Heart right ventricle (tissue), 16 donors: ENCODE measurements at regions of chr11 and their contacts with region 1.

Region 1: GRCh38 chr11:85826116-85826855 is 15.3 kb upstream of the SYTL2 start:
- DNase-seq: peak; percentile 37 to 40
- ATAC-seq: peak in 7 of 8 donors; percentile 62 to 80 (median 70)
- H3K4me3 ChIP-seq: no peak overlapping the region
- H3K27ac ChIP-seq: no peak overlapping the region
- H3K4me1 ChIP-seq: peaks cover 0 to 32% (median 0%) of the 10 kb centered on the region in 9 donors
- H3K27me3 ChIP-seq: no peaks in the 10 kb centered on the region
- CTCF ChIP-seq: peak; percentile 25 to 68 (median 57)

Region 2: GRCh38 chr11:85182441-85183387 is 643.6 kb before region 1 on chr11:
- intact Hi-C with region 1: loop called in 1 of 10 experiments (anchors 5 kb)
- DNase-seq: no peak
- ATAC-seq: no peak
- H3K4me3 ChIP-seq: no peak overlapping the region
- H3K27ac ChIP-seq: no peak overlapping the region
- H3K4me1 ChIP-seq: no peaks in the 10 kb centered on the region
- H3K27me3 ChIP-seq: no peaks in the 10 kb centered on the region
- CTCF ChIP-seq: peak in 5 of 9 donors; percentile 11 to 38 (median 24)

Region 3: GRCh38 chr11:85595285-85595884 is 230.9 kb before region 1 on chr11:
- intact Hi-C with region 1: loop called in 8 of 10 experiments (anchors 2 to 10 kb)
- DNase-seq: no peak
- ATAC-seq: peak in 1 of 8 donors; percentile 62
- H3K4me3 ChIP-seq: no peak overlapping the region
- H3K27ac ChIP-seq: no peak overlapping the region
- H3K4me1 ChIP-seq: no peaks in the 10 kb centered on the region
- H3K27me3 ChIP-seq: no peaks in the 10 kb centered on the region
- CTCF ChIP-seq: peak; percentile 42 to 79 (median 65)

Region 4: DNA sequence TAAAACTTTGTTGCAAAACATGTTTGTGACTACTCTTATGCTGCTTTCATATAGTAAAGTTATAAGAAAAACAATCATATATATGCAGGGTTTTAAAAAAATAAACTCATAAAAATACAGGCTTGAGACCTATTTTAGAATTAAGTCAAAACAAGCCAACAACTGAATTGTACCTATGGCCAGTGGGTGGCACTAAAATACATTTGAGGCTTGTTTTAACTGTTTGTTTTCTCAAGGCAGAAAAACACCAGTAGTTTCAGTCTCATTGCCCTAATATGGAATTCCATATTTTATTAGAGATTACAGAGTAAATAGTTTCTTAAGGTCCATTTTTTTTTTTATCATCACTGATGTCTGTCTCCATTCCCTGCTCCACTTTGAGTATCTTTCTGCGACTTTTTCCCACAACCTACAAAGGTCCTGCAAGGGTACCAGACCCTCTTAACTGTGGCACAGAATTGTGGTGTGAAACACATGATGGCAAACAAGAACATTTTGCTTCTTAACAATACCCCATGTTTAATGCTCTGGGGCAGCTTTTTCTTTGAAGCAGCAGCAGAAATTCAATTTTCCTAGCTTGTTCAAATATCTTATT is 131.8 kb before region 1 on chr11:
- intact Hi-C with region 1: loop called in 7 of 10 experiments (anchors 2 to 10 kb)
- DNase-seq: no peak
- ATAC-seq: no peak
- H3K4me3 ChIP-seq: no peak overlapping the region
- H3K27ac ChIP-seq: no peak overlapping the region
- H3K4me1 ChIP-seq: peaks cover 0 to 1% (median 0%) of the 10 kb centered on the region in 9 donors
- H3K27me3 ChIP-seq: no peaks in the 10 kb centered on the region
- CTCF ChIP-seq: peak in 8 of 9 donors; percentile 16 to 73 (median 60)

Region 5: DNA sequence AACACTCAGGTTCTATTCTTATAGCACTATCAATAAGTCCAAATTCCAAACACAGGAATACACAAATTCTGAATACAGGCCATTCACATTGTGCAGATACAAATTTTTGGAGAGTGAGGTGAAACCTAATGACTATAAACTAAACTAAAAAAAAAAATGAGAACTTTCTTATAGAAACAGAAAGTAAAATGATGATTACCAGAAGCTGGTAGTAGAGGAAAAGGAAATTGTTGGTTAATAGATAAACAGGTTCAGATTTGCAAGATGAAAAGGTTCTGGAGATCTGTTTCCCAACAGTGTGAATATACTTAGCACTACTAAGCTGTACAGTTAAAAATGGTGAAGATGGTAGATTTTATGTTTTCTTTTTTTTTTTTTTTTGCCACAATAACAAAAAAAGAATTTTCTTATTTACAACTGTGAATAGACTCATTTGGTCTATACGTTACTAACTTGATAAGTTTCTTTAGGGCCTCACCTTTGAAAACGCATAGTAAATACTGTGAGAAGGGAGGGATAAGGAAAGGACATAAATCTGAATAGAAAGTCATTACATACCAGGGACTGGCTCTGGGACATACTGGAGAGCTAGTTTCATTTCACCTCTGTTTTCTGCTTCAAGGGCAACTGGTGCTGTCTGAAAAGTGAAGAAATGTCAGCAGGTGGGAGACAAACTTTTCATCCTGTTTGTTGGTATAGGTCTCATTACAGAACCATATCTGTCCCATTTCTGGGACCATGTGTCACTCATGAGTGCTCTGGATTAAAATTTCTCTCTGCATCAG is 126.1 kb before region 1 on chr11:
- intact Hi-C with region 1: loop called in 5 of 10 experiments (anchors 2 to 10 kb)
- DNase-seq: no peak
- ATAC-seq: no peak
- H3K4me3 ChIP-seq: no peak overlapping the region
- H3K27ac ChIP-seq: peak overlapping the region in 1 of 10 donors; percentile 64
- H3K4me1 ChIP-seq: peaks cover 0 to 13% (median 0%) of the 10 kb centered on the region in 9 donors
- H3K27me3 ChIP-seq: no peaks in the 10 kb centered on the region
- CTCF ChIP-seq: no peak

Region 6: GRCh38 chr11:85918910-85919794 is 92.9 kb after region 1 on chr11:
- intact Hi-C with region 1: no loop called
- DNase-seq: no peak
- ATAC-seq: no peak
- H3K4me3 ChIP-seq: no peak overlapping the region
- H3K27ac ChIP-seq: no peak overlapping the region
- H3K4me1 ChIP-seq: peaks cover 0 to 2% (median 0%) of the 10 kb centered on the region in 9 donors
- H3K27me3 ChIP-seq: peaks cover 0 to 6% (median 0%) of the 10 kb centered on the region in 7 donors
- CTCF ChIP-seq: no peak

Region 7: DNA sequence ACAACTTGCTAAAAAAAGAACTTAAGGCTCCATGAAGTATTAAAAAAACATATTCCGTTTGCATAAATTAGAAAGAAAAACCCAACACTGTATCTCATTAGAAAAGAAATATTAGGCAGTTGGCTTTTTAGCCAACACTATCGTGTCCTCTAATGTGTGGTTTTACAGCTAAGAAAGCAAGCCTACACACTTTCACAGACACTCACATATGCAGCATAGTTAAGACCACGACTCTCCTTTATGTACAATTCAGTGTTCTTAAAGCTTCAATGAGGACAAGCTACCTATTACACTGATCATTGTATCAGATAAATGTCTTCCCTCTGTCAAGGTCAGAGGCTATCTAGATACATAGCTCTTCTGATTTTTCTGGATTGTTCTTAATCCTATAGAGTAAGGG is 162.5 kb after region 1 on chr11:
- intact Hi-C with region 1: no loop called
- DNase-seq: no peak
- ATAC-seq: no peak
- H3K4me3 ChIP-seq: no peak overlapping the region
- H3K27ac ChIP-seq: peak overlapping the region in 2 of 10 donors; percentile 2 to 5
- H3K4me1 ChIP-seq: peaks cover 0 to 28% (median 15%) of the 10 kb centered on the region in 9 donors
- H3K27me3 ChIP-seq: no peaks in the 10 kb centered on the region
- CTCF ChIP-seq: no peak